ENCODE measurements at regions of chr21 and their contacts with region 1.

Region 1: DNA sequence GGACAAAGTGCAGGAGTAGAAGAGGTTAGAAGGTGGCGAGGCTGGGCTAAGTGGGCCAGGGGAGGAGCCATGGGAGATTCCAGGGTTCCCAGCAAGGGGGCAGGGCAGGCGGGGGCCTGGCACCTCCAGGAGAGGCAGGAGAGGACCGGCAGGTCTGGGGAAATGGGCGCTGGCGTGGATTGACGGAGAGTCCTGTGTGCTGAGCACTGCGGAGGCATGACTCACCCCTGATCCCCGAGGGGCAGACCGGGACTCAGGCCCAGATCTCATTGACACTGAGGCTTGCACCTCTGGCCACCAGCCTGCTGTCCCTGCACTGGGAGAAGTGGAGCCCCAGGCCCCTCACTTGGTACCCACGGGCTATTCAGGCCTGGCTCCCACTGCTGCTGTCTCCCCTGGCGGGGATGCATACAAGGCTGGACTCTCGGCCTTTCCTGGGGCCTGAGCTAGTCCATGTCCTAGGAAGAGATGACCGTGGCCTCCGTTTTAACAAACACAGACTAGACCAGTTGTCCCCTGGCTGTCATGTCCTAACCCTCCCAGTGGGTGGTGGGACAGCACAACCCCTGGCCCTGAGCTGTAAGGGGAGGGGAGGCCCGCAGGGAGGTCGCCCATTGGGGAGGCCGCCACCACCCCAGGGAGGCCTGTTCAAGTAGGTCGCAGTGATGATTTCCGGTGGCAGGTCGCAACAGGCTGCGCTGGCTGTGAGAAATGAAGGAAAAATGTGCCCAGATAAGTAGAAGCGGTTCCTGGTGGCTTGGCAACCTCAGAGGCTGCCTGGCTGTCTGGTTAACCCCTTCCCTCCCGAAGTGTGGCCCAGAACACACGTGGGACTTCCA is 39.7 kb downstream of the RIPK4 start:
- DNase-seq: peak in 1 of 10 donors; percentile 17
- H3K4me3 ChIP-seq: no peak overlapping the region
- H3K27ac ChIP-seq: no peak overlapping the region
- H3K27me3 ChIP-seq: peaks cover 0 to 49% (median 16%) of the 10 kb centered on the region in 45 donors
- CTCF ChIP-seq: no peak

Region 2: GRCh38 chr21:41653954-41654491 is 73.1 kb before region 1 on chr21:
- intact Hi-C with region 1: no loop called
- DNase-seq: no peak
- H3K4me3 ChIP-seq: no peak overlapping the region
- H3K27ac ChIP-seq: no peak overlapping the region
- H3K27me3 ChIP-seq: peaks cover 0 to 6% (median 0%) of the 10 kb centered on the region in 45 donors
- CTCF ChIP-seq: no peak

Region 3: DNA sequence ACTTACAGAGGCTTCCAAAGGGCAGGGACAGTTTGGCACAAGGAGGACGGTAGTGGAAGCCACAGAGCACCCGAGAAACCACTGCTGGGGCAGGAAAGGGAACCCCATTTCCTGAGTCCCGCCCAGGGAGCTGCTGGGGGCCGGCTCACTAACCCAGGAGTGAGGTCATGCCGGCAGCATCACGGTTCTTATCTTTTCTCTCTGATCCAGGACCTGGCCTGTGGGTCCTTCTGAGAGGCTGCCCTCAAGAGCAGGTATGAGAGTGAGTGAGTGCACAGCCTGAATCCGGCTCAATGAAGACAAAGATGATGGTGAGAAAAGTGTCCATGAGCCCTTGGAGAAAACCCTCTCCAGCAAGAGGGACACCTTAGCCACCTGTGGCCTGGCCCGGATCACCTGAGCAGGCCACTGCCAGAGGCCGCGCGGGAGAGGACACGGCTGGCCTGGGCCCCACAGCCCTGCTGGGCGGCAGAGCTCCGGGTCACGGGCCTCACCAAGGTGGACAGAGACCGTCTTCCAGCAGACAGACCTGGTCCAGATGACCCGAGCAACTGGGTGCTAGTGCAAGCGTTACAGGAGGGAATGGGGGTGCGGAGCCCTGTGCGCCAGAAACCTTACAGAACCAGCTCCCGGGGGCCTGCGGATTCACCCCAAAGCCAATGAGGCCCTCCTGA is 55.2 kb before region 1 on chr21:
- intact Hi-C with region 1: loop called in 1 of 2 experiments (anchors 5 kb)
- DNase-seq: no peak
- H3K4me3 ChIP-seq: no peak overlapping the region
- H3K27ac ChIP-seq: no peak overlapping the region
- H3K27me3 ChIP-seq: peaks cover 0 to 3% (median 0%) of the 10 kb centered on the region in 45 donors
- CTCF ChIP-seq: no peak

Measured in dorsolateral prefrontal cortex (tissue), 120 donors.